OCI-LY7 (cell line): ENCODE measurements at regions of chr3 and their contacts with region 1.

Region 1: DNA sequence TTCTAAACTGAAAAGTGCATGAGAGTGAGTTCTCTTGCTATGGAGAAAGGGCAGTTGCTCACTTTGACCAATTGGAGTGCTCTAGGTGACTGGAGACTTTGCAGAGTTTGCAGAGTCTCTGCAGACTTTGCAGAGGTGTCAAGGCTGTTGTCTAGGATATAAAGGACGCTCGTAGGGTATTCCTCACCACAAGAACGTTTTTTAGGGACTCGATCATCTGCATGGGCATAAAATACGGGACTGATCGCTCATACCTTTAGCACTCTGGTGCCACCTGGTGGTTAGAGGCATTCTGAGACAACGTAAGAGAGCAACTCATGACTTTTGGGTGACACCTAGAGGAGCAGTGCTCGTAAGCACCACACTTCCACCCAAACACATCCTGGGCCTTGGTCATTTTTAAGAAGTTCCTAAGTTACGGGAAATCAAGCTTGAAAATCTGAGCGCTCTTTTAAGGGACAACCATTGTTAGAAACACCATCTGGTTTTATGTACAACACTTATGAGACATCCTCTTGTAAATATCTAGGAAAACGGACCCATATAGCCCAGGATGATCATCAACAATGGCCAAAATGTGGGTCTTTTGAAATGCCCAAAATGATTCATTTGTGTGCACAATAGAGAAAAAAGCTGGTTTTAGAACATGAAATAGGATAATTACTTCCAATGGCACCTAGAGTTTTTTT is 51.6 kb upstream of the XCR1 start:
- DNase-seq: peak; percentile 92
- H3K4me3 ChIP-seq: no peak overlapping the region
- H3K27ac ChIP-seq: no peak overlapping the region
- H3K4me1 ChIP-seq: no peaks in the 10 kb centered on the region
- CTCF ChIP-seq: peak; percentile 100

Region 2: DNA sequence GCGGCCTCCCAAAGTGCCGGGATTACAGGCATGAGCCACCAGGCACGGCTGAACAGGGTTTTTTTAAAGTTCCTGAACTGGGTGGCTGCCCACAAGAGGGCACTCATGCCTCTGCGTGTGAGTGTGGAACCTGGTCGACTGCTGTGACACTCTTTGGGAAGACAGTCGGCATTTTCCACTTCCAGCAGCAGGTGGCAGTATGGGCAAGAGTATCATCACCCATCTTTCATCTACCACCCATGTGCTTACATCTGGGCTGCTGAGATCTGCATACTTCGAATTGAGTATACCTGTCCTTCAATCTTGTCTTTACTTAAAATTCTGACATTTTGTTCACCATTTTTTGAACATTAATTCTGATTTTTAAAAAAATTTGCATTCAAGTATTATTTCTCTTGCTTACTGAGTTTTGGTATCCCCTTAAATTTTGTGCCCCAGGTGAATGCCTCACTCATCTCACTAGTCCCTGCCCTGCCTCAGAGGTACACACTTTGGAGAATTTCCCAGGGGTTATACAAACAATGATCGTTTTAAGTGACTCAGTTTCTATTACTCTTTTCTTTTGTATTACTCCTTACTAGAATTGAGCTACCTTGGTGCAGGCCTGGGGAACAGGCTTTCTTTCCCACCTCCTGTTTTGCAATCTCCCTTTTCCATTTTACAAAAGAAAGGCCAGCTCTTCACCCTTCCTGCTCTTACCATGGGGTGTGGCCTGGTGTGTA is 1041.0 kb before region 1 on chr3:
- CTCF ChIA-PET with region 1: no interaction called
- POLR2A ChIA-PET with region 1: no interaction called
- intact Hi-C with region 1: loop called (anchors 5 kb)
- DNase-seq: peak; percentile 91
- H3K4me3 ChIP-seq: no peak overlapping the region
- H3K27ac ChIP-seq: no peak overlapping the region
- H3K4me1 ChIP-seq: no peaks in the 10 kb centered on the region
- CTCF ChIP-seq: peak; percentile 93

Region 3: DNA sequence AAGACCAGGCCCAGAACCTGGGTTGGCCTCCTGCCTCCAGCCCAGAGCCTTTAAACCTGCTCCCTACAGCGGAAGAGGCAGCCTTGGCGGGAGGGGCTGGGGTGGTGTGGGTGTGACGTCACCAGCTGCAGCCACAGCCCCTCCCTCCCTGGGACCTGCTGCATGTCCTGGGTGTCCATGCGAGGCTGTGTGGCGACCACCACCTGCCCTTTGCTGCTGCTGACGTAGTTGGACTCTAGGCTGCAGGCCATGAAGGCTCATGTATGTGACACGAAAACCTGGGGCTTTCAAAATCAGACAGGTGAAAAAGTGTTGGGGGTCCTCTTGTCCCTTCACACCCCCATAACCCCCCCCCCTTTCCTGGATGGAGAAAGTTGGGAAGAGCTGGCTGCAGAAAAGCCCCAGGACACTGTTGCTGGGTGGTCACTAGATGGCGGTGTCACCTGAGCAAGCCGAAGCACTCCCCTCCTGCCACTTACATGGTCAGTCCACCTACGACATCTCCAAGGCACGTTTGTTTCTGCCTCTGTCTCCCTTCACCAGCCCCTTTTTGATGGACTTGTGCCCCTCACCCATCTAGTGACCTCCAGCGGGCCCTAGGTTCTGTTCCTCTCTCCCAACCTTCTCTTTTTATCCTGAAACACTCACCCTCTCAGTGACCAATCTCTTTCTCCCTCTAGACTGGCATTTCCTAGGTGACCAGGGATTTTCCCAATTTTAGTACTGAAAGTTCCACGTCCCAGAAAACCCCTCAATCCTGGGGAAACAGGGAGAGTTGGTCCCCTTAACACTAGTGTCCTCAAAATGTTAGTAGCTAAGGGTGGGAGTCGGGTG is 317.8 kb before region 1 on chr3:
- CTCF ChIA-PET with region 1: no interaction called
- POLR2A ChIA-PET with region 1: no interaction called
- intact Hi-C with region 1: loop called (anchors 1 kb)
- DNase-seq: peak; percentile 53
- H3K4me3 ChIP-seq: no peak overlapping the region
- H3K27ac ChIP-seq: no peak overlapping the region
- H3K4me1 ChIP-seq: no peaks in the 10 kb centered on the region
- CTCF ChIP-seq: peak; percentile 85

Region 4: DNA sequence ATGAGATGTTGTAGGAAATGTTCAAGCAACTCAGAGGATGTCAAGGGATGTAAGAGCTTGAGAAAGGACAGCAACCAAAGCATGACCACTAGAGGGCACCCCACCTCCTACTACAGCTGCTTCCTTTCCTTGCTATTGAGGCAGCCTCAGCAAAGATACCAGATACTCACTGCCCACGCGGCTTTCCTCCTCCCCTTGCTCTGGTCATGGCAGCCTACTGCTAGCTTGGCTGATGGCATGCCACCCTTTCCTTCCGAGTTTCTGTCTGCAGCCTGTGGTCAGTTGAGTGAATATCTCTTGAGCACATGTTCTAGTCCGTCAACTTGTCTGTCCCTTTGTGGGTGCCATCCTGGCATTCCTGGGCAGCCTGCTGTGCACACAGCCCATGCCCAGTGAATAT is 140.0 kb before region 1 on chr3:
- CTCF ChIA-PET with region 1: interaction called, 4 read pairs
- POLR2A ChIA-PET with region 1: interaction called, 3 read pairs
- intact Hi-C with region 1: loop called (anchors 1 kb)
- DNase-seq: peak; percentile 80
- H3K4me3 ChIP-seq: no peak overlapping the region
- H3K27ac ChIP-seq: no peak overlapping the region
- H3K4me1 ChIP-seq: no peaks in the 10 kb centered on the region
- CTCF ChIP-seq: peak; percentile 86